ENCODE measurements at regions of chr7 and their contacts with region 1.

Region 1: DNA sequence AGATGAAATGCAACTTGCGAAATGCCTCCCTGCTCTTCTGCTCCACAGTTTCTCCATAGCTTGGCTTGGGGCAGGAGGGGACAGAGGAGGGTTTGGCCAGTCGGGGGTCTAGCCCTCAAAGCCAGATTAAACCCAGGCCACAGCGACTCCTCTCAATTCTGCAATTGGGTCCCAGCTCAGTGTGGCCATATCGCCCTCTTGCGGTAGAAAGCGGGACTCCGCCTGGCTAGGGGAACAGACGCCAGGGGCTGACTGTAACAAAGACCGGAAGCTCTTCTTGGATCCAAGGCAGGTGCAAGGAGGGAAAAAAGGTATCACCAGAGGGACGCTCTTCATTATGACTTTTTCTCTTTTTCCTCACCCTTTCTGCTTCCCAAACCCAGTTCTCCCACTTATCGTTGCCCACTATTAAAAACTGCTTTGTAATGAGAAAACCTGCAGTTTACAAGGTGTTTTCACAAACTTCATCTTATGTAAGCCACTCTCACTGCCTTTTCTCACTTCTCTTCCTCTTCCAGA is 36.6 kb upstream of the TNPO3 start:
- DNase-seq: no peak
- H3K4me3 ChIP-seq: no peak overlapping the region
- CTCF ChIP-seq: peak; percentile 99

Region 2: DNA sequence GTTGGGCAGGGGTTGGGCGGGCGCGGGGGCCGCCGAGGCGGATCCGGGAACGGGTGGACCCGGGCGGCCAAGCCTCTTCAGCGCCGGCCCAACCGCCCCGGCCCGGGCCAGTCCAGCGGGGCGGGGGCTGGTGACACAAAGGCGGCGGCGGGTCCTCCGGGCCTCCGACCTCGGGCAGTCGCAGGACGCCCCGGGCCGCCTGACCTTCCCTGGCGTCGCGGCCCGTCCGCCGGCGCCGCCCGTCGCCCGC is 560.8 kb before region 1 on chr7:
- CTCF ChIA-PET with region 1: no interaction called
- POLR2A ChIA-PET with region 1: no interaction called
- DNase-seq: no peak
- H3K4me3 ChIP-seq: peak overlapping the region; percentile 76
- CTCF ChIP-seq: no peak

Region 3: GRCh38 chr7:128862571-128863432 is 228.7 kb before region 1 on chr7 and contains the start of gene ATP6V1F:
- CTCF ChIA-PET with region 1: interaction called, 29 read pairs
- POLR2A ChIA-PET with region 1: no interaction called
- DNase-seq: peak; percentile 71
- H3K4me3 ChIP-seq: peak within 1 kb of the TSS; percentile 85
- CTCF ChIP-seq: no peak

Region 4: GRCh38 chr7:128909625-128910257 is 181.8 kb before region 1 on chr7:
- CTCF ChIA-PET with region 1: interaction called, 136 read pairs
- POLR2A ChIA-PET with region 1: no interaction called
- DNase-seq: no peak
- H3K4me3 ChIP-seq: peak overlapping the region; percentile 54
- CTCF ChIP-seq: no peak

Region 5: GRCh38 chr7:129017933-129018538 is 73.5 kb before region 1 on chr7:
- CTCF ChIA-PET with region 1: interaction called, 11 read pairs
- POLR2A ChIA-PET with region 1: no interaction called
- DNase-seq: no peak
- H3K4me3 ChIP-seq: no peak overlapping the region
- CTCF ChIP-seq: no peak

Region 6: GRCh38 chr7:129066290-129067131 is 25.0 kb before region 1 on chr7:
- CTCF ChIA-PET with region 1: interaction called, 16 read pairs
- POLR2A ChIA-PET with region 1: no interaction called
- DNase-seq: peak; percentile 17
- H3K4me3 ChIP-seq: no peak overlapping the region
- CTCF ChIP-seq: no peak

Region 7: GRCh38 chr7:129110258-129110981 is 18.9 kb after region 1 on chr7:
- CTCF ChIA-PET with region 1: interaction called, 11 read pairs
- POLR2A ChIA-PET with region 1: no interaction called
- DNase-seq: no peak
- H3K4me3 ChIP-seq: no peak overlapping the region
- CTCF ChIP-seq: no peak

Region 8: GRCh38 chr7:129262324-129262723 is 170.8 kb after region 1 on chr7:
- CTCF ChIA-PET with region 1: no interaction called
- POLR2A ChIA-PET with region 1: no interaction called
- DNase-seq: no peak
- H3K4me3 ChIP-seq: no peak overlapping the region
- CTCF ChIP-seq: no peak